ENCODE measurements at regions of chr13 and their contacts with region 1.

Region 1: GRCh38 chr13:20106742-20107141 is 54.1 kb downstream of the GJA3 start:
- DNase-seq: no peak
- ATAC-seq: no peak
- H3K4me3 ChIP-seq: no peak overlapping the region
- H3K4me3 Mint-ChIP-seq: no peak overlapping the region
- H3K27ac ChIP-seq: no peak overlapping the region
- H3K27ac Mint-ChIP-seq: no peak overlapping the region
- H3K4me1 ChIP-seq: no peaks in the 10 kb centered on the region
- H3K4me1 Mint-ChIP-seq: no peaks in the 10 kb centered on the region
- H3K27me3 ChIP-seq: peaks cover 0 to 34% of the 10 kb centered on the region in 2 experiments
- H3K27me3 Mint-ChIP-seq: peaks cover 24 to 43% of the 10 kb centered on the region in 2 donors

Region 2: DNA sequence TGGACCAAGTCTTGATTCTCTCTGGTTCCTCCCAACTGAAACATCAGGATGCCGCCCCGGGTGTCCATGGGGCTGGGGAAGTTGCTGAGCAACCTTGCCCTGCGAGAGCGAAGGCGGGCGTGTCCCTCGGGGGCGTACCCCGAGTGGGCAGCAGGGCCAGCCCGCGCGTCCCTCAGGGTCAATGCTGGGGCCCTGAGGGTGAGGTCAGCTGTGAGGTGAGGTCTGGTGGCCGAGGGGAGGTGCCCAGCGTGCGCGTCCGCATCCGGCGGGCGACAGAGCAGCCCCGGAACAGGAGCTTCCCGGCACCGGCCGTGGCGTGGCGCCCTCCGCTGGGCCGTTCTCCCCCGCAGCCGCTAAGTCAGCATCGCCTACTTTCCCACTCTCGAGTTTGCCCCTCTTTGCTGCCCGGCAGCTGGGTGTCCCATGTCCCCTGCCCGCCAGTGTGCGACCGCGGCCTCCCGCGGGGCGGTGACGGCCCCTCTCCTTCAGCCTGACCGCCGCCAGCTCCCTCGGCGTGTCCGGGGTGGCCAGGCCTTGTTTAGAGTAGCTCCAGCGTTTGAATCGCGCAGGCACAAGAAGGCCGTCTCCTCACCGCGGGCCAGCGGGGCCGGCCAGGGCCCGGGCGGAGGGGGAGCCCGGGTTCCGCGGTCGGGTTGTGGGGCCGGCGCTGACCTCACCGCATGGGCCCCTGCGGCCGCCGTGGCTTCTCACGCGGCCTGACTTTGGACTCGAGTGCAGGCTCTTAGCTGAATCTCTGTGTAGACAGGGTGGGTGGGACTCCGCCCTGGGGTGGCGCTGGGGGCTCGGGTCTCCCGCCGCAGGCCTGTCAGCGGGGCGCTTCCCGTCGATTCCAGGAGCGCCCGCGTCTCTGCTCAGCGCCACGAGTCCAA is 21.1 kb after region 1 on chr13:
- CTCF ChIA-PET with region 1: no interaction called
- POLR2A ChIA-PET with region 1: interaction called in 1 of 2 experiments, 11 read pairs
- DNase-seq: peak in 14 of 35 experiments; percentile 8 to 54 (median 30)
- ATAC-seq: peak; percentile 69 to 80 (median 77)
- H3K4me3 ChIP-seq: peak overlapping the region; percentile 53 to 67
- H3K4me3 Mint-ChIP-seq: peak overlapping the region; percentile 61 to 69 (median 62)
- H3K27ac ChIP-seq: no peak overlapping the region
- H3K27ac Mint-ChIP-seq: no peak overlapping the region
- H3K4me1 ChIP-seq: peaks cover 0 to 20% of the 10 kb centered on the region in 2 experiments
- H3K4me1 Mint-ChIP-seq: peaks cover 0 to 8% (median 5%) of the 10 kb centered on the region in 3 donors
- H3K27me3 ChIP-seq: peaks cover 7 to 62% of the 10 kb centered on the region in 2 experiments
- H3K27me3 Mint-ChIP-seq: peaks cover 5 to 27% of the 10 kb centered on the region in 2 donors

Measured in T-cell (primary cell).